Natural killer cell (primary cell): ENCODE measurements at regions of chr5 and their contacts with region 1.

Region 1: DNA sequence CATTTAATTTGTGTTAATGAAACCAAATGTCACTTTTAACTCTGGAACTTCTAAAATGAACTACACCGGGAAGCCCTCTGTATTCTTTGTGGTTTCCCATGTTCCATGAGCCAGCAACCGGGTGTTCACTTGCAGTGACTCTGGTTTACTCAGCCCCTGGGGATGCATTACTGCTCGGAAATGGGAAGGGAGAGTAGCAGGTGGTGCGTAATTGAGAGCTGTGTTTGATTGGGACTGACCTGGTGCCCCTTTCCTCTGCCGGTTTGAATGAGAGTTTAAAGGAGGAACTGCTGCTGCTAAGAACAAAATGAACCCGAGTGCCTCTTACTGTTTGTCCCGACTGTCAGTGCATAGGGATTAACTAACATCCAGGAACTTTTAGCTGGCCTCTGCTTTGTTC is 100.1 kb upstream of the DHFR start:
- DNase-seq: no peak
- ATAC-seq: no peak
- H3K4me3 ChIP-seq: no peak overlapping the region
- H3K4me3 Mint-ChIP-seq: peak overlapping the region; percentile 75
- H3K27ac ChIP-seq: peak overlapping the region; percentile 92
- H3K27ac Mint-ChIP-seq: peak overlapping the region; percentile 91 to 94
- H3K4me1 ChIP-seq: peaks cover 19% of the 10 kb centered on the region
- H3K4me1 Mint-ChIP-seq: peaks cover 62 to 82% of the 10 kb centered on the region in 2 donors
- H3K27me3 ChIP-seq: no peaks in the 10 kb centered on the region
- H3K27me3 Mint-ChIP-seq: no peaks in the 10 kb centered on the region
- CTCF ChIP-seq: no peak

Region 2: GRCh38 chr5:80852331-80853245 is 97.7 kb after region 1 on chr5:
- intact Hi-C with region 1: loop called (anchors 5 kb)
- DNase-seq: no peak
- ATAC-seq: no peak
- H3K4me3 ChIP-seq: no peak overlapping the region
- H3K4me3 Mint-ChIP-seq: no peak overlapping the region
- H3K27ac ChIP-seq: no peak overlapping the region
- H3K27ac Mint-ChIP-seq: no peak overlapping the region
- H3K4me1 ChIP-seq: no peaks in the 10 kb centered on the region
- H3K4me1 Mint-ChIP-seq: no peaks in the 10 kb centered on the region
- H3K27me3 ChIP-seq: no peaks in the 10 kb centered on the region
- H3K27me3 Mint-ChIP-seq: no peaks in the 10 kb centered on the region
- CTCF ChIP-seq: no peak

Region 3: GRCh38 chr5:80960531-80961375 is 205.9 kb after region 1 on chr5:
- intact Hi-C with region 1: loop called (anchors 5 kb)
- DNase-seq: peak; percentile 19 to 69
- ATAC-seq: peak; percentile 34 to 62 (median 56)
- H3K4me3 ChIP-seq: peak overlapping the region; percentile 40
- H3K4me3 Mint-ChIP-seq: peak overlapping the region; percentile 88
- H3K27ac ChIP-seq: no peak overlapping the region
- H3K27ac Mint-ChIP-seq: peak overlapping the region in 1 of 2 donors; percentile 37
- H3K4me1 ChIP-seq: peaks cover 21% of the 10 kb centered on the region
- H3K4me1 Mint-ChIP-seq: peaks cover 25 to 35% of the 10 kb centered on the region in 2 donors
- H3K27me3 ChIP-seq: peaks cover 9% of the 10 kb centered on the region
- H3K27me3 Mint-ChIP-seq: peaks cover 24 to 35% of the 10 kb centered on the region in 2 donors
- CTCF ChIP-seq: no peak

Region 4: GRCh38 chr5:81606150-81606549 is 851.2 kb after region 1 on chr5:
- intact Hi-C with region 1: no loop called
- DNase-seq: no peak
- ATAC-seq: no peak
- H3K4me3 ChIP-seq: no peak overlapping the region
- H3K4me3 Mint-ChIP-seq: no peak overlapping the region
- H3K27ac ChIP-seq: no peak overlapping the region
- H3K27ac Mint-ChIP-seq: no peak overlapping the region
- H3K4me1 ChIP-seq: no peaks in the 10 kb centered on the region
- H3K4me1 Mint-ChIP-seq: no peaks in the 10 kb centered on the region
- H3K27me3 ChIP-seq: no peaks in the 10 kb centered on the region
- H3K27me3 Mint-ChIP-seq: no peaks in the 10 kb centered on the region
- CTCF ChIP-seq: no peak